ENCODE measurements at regions of chr9 and their contacts with region 1.

Region 1: GRCh38 chr9:6090317-6090716 is 74.9 kb upstream of the RANBP6 start:
- DNase-seq: no peak
- ATAC-seq: peak; percentile 95

Region 2: GRCh38 chr9:6054280-6055099 is 35.8 kb before region 1 on chr9:
- intact Hi-C with region 1: no loop called
- DNase-seq: peak; percentile 61
- ATAC-seq: peak; percentile 83

Region 3: DNA sequence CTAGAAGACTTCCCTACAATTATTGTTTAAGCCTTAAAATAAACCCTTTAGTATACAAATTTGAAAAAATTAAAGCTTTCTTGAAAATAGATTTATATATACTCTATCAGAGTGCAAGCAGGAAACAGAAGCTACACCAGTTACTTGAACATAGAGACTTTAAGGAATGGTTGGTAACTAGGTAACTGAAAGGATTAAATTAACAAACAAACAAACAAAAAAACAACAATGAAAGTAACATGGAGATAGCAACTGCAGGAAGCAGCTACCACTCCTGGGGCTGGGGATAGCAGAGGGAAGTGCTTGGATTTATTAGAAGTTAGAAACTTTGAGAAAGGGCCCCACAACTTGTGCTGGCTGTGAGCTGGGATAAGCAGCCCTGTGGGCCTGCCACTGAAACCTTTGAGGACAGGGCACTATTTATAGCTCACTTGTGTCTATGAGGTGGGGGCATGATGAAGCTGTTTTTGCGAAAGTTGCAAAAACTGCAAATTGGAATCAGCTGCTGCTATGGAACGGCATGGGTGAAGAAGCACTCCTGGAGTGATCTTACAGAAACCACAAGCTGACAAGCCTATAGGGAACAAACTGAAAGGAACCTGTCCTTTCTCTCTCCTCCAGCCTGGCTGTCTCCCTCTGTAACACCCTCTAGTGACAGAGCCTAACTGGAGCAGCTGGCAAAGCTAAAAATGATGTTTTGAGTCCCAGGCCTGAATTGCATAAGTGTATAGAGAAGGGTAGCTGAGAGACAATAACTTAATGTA is 16.4 kb after region 1 on chr9:
- intact Hi-C with region 1: loop called (anchors 2 kb)
- DNase-seq: no peak
- ATAC-seq: peak; percentile 95

Measured in Right ventricle myocardium inferior (tissue), 1 donor.